ENCODE measurements at regions of chr12 and their contacts with region 1.

Region 1: GRCh38 chr12:117236456-117237001 is 46.3 kb upstream of the FBXO21 start:
- DNase-seq: peak; percentile 27 to 93 (median 59)
- ATAC-seq: peak; percentile 79
- H3K4me3 ChIP-seq: no peak overlapping the region
- H3K27ac ChIP-seq: no peak overlapping the region
- H3K4me1 ChIP-seq: no peaks in the 10 kb centered on the region
- H3K27me3 ChIP-seq: peaks cover 0 to 45% of the 10 kb centered on the region in 2 donors
- CTCF ChIP-seq: peak; percentile 67 to 81

Region 2: GRCh38 chr12:117836999-117837736 is 600.6 kb after region 1 on chr12:
- intact Hi-C with region 1: loop called in 1 of 2 experiments (anchors 5 kb)
- DNase-seq: peak; percentile 50 to 88 (median 71)
- ATAC-seq: peak; percentile 90
- H3K4me3 ChIP-seq: no peak overlapping the region
- H3K27ac ChIP-seq: no peak overlapping the region
- H3K4me1 ChIP-seq: no peaks in the 10 kb centered on the region
- H3K27me3 ChIP-seq: peaks cover 0 to 32% of the 10 kb centered on the region in 2 donors
- CTCF ChIP-seq: peak; percentile 90 to 93

Measured in left lung (tissue), 14 donors.